ENCODE measurements at regions of chr11 and their contacts with region 1.

Region 1: DNA sequence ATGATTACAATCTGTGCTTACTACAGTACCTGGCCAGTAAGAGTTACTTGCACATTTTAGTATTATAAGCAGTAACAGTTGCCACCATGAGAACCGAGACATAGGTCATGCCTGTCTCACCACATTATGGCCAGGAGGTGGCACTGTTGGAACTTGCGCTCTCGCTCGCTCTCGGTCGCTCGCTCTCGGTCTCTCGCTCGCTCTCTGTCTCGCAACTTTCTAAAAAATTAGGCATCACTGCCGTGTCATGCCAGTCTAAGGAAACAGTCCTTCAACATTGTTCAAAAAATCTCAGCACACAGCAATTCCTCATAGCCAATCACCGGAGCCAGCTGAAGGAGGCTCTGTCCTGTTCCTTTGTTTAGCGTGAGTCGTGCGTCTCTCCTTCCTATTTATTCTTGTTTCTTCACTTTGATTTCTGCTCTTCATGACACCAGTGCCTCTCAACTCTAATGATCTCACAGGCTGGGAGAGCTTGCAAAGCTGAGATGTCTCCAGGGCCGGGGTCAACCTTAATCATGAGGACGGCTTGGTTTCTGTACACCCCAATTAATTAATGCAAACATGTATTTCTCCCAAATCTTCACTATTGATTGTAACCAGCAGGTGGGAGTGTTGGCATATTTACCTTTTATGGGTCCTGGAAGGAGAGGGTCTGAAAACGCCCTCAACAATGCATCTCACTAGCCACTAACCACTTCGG is 6.3 kb upstream of the ADAMTS8 start:
- DNase-seq: peak; percentile 69 to 86 (median 82)
- H3K4me3 ChIP-seq: peak overlapping the region; percentile 43 to 96 (median 69)
- H3K27ac ChIP-seq: peak overlapping the region in 51 of 59 donors; percentile 6 to 81 (median 63)
- H3K27me3 ChIP-seq: peaks cover 0 to 9% (median 0%) of the 10 kb centered on the region in 45 donors
- CTCF ChIP-seq: peak; percentile 73 to 98 (median 88)

Region 2: DNA sequence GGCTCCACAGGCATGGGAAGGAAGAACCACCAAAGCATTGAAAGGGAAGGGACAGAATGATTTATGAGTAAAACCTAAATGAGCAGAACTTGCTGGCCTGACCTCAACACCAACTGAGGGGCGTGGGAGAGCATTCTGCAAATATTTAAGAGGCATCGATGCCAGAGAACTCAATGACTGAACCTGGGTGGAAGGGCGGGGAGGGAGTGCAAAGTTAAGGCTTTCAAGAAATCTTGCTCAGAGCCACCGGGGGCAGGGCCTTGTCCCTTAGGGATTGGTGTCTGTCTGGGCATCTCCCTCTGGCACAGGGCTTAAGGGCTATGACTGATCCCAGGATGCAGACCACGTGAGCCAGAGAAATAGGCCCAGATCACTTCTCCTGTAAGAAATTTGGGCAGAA is 150.9 kb after region 1 on chr11:
- intact Hi-C with region 1: loop called in 1 of 2 experiments (anchors 5 kb)
- DNase-seq: no peak
- H3K4me3 ChIP-seq: no peak overlapping the region
- H3K27ac ChIP-seq: no peak overlapping the region
- H3K27me3 ChIP-seq: no peaks in the 10 kb centered on the region
- CTCF ChIP-seq: no peak

Region 3: DNA sequence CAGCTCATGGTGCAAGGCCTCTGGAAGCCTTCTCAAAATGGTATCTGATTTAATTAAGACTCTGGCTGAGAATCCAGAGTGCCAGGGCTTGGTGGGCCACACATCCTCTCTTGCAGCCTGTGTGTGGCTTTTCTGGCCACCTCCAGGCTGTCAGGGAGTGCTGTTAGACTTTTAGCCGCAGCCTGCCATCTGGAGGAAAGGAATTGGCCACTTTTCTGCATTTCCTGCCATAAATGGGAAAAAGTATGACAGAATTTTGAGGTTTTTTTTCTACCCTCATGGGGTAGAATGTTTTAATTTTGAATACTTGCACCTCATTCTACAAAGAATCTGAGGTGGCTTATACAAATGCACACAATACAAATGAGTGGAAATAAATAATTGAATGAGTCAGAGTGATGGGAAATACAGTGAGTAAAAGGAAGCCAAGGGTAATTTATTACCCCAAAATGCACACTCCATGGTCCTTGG is 232.1 kb after region 1 on chr11:
- intact Hi-C with region 1: loop called (anchors 1 to 2 kb)
- DNase-seq: peak in 1 of 10 donors; percentile 12
- H3K4me3 ChIP-seq: no peak overlapping the region
- H3K27ac ChIP-seq: no peak overlapping the region
- H3K27me3 ChIP-seq: peaks cover 0 to 4% (median 0%) of the 10 kb centered on the region in 45 donors
- CTCF ChIP-seq: peak in 45 of 56 donors; percentile 14 to 69 (median 38)

Region 4: DNA sequence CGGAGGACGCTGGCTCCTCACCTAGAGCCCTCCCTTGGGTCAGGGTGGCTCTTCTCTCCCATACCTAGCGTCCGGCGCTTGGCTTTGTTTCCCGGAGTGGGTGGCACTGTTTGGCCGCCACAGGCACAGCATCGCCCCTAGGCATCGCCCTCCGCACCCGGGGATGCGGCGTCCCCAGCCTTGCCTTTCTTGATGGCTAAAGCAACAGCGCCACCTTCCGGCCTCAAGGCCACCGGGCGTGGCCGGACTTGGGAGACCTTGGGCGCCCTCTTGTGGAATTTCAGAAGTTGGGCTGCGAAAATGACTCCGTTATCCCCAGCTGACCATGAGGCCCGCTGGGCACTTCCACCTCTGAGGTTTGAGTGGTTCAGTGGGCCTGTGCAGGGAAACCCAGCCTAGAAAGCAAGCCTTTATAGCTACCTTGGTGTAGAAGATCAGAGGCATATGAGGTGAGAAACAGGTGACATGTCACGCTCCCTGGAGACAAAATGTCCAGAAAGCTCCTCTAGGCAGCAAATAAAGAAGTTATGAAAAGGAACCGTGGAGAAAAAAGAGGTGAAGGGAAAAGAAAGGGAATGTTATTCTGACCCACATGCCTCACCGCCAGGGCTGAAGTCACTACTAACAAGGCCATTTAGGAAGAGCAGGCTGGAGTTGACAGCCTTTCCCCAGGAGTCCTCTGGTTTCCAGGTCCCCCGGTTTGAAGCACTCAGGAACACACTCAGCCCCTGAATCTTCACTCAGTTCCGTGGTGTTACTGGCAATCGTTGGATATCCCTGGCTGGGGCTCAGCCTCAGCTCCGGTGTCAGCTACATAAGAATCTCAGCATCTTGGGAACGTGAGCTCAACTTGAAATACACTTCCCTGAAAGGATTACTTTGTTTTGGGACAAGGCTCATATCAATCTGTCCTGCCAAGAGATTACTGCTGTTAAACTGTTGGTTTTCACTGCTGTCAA is 427.5 kb after region 1 on chr11:
- intact Hi-C with region 1: loop called (anchors 1 to 2 kb)
- DNase-seq: peak; percentile 87 to 95 (median 92)
- H3K4me3 ChIP-seq: peak overlapping the region in 57 of 59 donors; percentile 4 to 65 (median 45)
- H3K27ac ChIP-seq: peak overlapping the region in 12 of 59 donors; percentile 6 to 79 (median 41)
- H3K27me3 ChIP-seq: no peaks in the 10 kb centered on the region
- CTCF ChIP-seq: peak; percentile 97 to 100 (median 100)

Region 5: DNA sequence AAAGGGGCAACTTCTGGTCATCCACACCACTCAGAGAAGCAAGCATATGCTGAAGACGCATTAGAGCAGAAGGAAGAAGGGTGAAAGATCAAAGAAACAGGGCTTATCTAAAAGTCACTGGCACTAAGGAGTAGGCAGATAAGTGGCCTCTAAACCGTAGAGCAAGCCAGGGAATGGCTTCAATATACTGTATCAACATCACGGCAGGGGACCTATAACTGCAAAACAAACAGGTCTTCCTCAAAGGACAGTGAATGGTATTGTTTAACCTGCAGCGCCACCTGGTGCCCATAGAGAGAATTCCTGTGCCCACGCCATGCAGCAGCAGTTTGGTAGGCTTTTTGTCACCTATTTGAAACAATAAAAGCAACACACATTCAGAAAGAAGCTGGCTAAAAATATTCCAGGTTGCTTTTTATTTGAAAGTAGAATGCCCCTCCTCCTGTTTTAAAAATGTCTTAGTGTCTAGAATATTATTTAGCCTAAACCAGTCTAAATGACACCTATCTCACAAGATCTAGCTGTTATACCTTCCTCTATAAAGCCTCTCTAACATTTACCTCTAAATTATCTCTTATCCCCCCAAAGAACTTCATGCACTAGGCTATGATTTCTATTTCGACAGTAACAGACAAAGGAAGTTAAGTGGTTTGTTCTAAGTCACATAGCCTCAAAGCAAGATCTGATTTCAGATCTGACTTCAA is 459.8 kb after region 1 on chr11:
- intact Hi-C with region 1: loop called (anchors 1 to 10 kb)
- DNase-seq: peak; percentile 65 to 89 (median 80)
- H3K4me3 ChIP-seq: peak overlapping the region in 8 of 59 donors; percentile 2 to 25 (median 12)
- H3K27ac ChIP-seq: peak overlapping the region in 57 of 59 donors; percentile 16 to 88 (median 70)
- H3K27me3 ChIP-seq: no peaks in the 10 kb centered on the region
- CTCF ChIP-seq: peak; percentile 79 to 98 (median 94)

Measured in dorsolateral prefrontal cortex (tissue), 120 donors.